ENCODE measurements at regions of chr9 and their contacts with region 1.

Region 1: GRCh38 chr9:127905004-127905728 is 5.8 kb upstream of the ST6GALNAC6 start:
- DNase-seq: peak; percentile 79
- ATAC-seq: peak; percentile 43
- H3K4me3 ChIP-seq: peak overlapping the region in 4 of 5 experiments; percentile 27 to 63 (median 33)
- H3K4me3 Mint-ChIP-seq: peak overlapping the region; percentile 92
- H3K27ac ChIP-seq: peak overlapping the region; percentile 96 to 100
- H3K27ac Mint-ChIP-seq: peak overlapping the region; percentile 100
- H3K4me1 ChIP-seq: peaks cover 52 to 79% of the 10 kb centered on the region in 2 donors
- H3K4me1 Mint-ChIP-seq: peaks cover 59% of the 10 kb centered on the region
- H3K27me3 ChIP-seq: no peaks in the 10 kb centered on the region
- H3K27me3 Mint-ChIP-seq: no peaks in the 10 kb centered on the region
- CTCF ChIP-seq: no peak

Region 2: DNA sequence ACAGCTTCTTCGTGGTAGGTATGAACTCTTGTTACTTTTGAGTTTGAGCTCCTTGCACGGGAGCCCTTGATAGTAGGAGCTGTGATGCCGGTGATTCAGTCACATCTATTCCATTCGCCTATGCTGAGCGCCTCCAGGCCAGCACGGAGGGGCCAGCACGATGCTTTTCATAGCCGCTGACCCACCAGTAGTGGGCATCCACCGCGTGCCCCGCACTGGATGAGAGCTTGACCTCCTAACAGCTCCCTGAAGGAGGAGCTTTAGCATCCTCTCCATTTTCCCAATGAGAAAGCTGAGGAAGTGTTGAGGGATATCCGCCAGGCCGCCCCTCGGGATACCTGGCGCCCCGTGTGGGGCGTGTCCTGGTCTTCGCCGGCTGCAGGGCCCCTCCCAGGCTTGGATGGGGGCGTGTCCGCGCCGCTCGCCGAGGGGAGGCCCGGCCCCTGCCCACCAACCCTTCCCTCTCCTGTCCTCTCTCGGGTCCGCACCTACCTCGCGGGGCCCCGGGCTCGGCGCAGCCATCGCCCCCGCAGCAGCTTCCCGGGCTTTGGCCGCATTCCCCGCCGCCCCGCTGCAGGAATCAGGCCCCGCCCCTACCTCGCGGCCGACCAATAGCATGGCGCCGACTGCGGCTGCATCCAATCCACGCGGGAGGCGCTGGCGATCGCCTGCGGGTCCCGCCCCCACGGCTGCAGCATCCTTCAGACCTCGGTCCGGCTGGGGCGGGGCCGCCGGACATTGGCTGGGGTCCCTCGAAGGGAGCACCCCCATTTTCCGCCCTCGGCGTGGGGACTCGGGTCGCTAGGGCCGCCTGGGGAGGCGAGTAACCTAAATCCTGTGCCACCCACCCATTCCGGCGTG is 25.3 kb after region 1 on chr9 and contains the start of gene PIP5KL1:
- CTCF ChIA-PET with region 1: no interaction called
- POLR2A ChIA-PET with region 1: interaction called, 10 read pairs
- intact Hi-C with region 1: no loop called
- DNase-seq: peak; percentile 86
- ATAC-seq: peak; percentile 75
- H3K4me3 ChIP-seq: peak within 1 kb of the TSS; percentile 31 to 78 (median 64)
- H3K4me3 Mint-ChIP-seq: peak within 1 kb of the TSS; percentile 86
- H3K27ac ChIP-seq: no peak within 1 kb of the TSS
- H3K27ac Mint-ChIP-seq: peak within 1 kb of the TSS; percentile 73
- H3K4me1 ChIP-seq: peaks cover 33 to 41% of the 10 kb centered on the region in 2 donors
- H3K4me1 Mint-ChIP-seq: peaks cover 44% of the 10 kb centered on the region
- H3K27me3 ChIP-seq: peaks cover 0 to 33% (median 13%) of the 10 kb centered on the region in 4 experiments
- H3K27me3 Mint-ChIP-seq: peaks cover 9% of the 10 kb centered on the region
- CTCF ChIP-seq: no peak
- total RNA-seq, gene PIP5KL1: 1.4 and 2.1 TPM in 2 replicates